ENCODE measurements at regions of chr20 and their contacts with region 1.

Region 1: DNA sequence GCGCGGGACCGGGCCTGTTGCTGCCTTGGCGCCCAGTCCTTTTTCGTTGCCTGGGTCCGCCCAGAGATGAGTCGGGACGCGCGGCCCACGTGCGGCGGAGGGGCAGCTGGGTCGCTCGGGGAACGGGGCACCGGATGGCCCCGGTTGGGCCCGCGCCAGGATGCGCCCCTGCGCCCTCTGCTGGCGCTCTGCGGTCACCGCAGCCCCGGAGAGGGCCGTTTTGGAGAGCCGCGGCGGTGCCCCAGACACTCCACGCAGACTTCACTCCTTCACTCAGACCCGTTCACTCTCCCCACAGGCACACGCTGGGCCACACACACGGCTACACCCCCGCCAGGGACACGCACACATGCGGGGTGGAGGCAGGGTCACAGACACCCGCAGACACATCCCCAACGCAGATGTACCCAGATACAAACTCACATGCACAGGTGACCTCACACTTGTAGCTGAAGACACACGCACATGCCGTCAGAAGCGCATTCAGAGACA is 38.8 kb downstream of the SRC start:
- DNase-seq: peak; percentile 34 to 58 (median 46)
- ATAC-seq: peak; percentile 50
- H3K4me3 ChIP-seq: no peak overlapping the region
- H3K27ac ChIP-seq: no peak overlapping the region
- H3K4me1 ChIP-seq: peaks cover 29% of the 10 kb centered on the region
- H3K27me3 ChIP-seq: no peaks in the 10 kb centered on the region
- CTCF ChIP-seq: peak; percentile 65 to 84 (median 82)
- POLR2A ChIP-seq: no peak

Region 2: GRCh38 chr20:37270576-37271420 is 113.9 kb before region 1 on chr20:
- intact Hi-C with region 1: loop called (anchors 5 kb)
- DNase-seq: peak in 1 of 4 donors; percentile 51
- ATAC-seq: no peak
- H3K4me3 ChIP-seq: no peak overlapping the region
- H3K27ac ChIP-seq: peak overlapping the region in 1 of 4 donors; percentile 47
- H3K4me1 ChIP-seq: peaks cover 7% of the 10 kb centered on the region
- H3K27me3 ChIP-seq: no peaks in the 10 kb centered on the region
- CTCF ChIP-seq: no peak
- POLR2A ChIP-seq: no peak

Region 3: DNA sequence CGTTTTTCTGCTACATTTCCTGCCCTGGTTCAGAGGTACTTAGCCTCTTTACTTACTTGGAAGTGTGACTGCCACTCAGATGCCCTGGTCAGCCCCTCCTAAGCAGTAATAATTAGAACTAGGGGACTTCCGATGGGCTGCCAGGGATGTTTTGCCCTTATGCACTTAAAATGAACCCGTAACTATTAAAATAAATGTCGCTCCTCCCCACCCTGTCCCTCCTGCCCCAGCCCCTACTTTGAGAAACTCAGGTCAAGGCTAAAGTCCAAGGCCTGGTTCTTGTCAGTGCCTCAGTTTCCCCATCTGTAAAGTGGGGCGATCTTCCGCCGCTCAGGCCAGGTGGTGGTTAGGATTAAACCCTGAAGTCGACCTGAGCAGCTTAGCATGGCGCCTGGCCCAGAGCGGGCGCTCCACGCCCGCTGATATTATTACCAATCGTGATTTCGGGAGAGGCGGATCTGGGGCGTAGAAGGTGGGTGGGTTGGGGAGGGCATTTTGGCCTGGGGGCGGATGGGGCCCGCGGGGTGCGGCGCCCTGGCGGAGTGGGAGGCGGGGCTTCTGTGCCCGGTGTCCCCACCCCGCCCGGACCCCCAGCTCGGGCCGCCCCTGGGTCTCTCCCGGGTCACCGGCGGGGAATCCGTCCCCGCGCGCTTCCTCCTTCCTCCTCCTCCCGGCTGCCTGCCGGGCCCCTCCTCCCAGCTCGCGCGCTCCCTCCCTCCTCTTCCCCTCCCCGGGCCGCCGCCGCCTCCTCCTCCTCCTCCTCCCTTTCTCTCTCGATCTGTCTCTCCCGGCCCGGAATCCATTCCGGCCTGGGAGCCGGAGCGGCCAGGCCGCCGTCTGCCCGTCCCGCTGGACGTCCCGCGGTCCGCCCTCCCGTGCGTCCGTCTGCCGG is 39.1 kb before region 1 on chr20 and contains the start of gene SRC:
- intact Hi-C with region 1: loop called (anchors 5 kb)
- DNase-seq: peak; percentile 80 to 85 (median 82)
- ATAC-seq: peak; percentile 79
- H3K4me3 ChIP-seq: peak within 1 kb of the TSS; percentile 53 to 88
- H3K27ac ChIP-seq: peak within 1 kb of the TSS; percentile 79 to 90 (median 82)
- H3K4me1 ChIP-seq: peaks cover 63% of the 10 kb centered on the region
- H3K27me3 ChIP-seq: no peaks in the 10 kb centered on the region
- CTCF ChIP-seq: no peak
- POLR2A ChIP-seq: peak; percentile 43 to 81 (median 79)
- total RNA-seq, gene SRC: 25.9 to 35.3 TPM